ENCODE measurements at regions of chr5 and their contacts with region 1.

Region 1: DNA sequence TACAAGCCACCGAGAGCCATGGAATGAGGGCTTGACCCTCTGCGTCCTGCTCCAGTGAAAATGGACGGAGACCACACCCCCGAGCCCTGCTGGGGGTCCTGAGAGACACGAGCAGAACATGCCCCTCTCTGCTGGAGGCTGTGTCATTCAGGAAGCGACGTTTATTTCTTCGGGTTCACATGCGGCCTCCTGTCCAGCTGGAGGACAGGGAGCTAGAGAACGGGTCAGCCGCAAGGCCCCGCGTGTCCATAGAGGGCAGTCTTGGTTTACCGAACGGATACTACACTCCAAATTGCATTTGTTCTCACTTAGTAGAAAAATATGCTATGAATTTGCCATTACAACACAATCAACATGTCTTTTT is 36.1 kb downstream of the MRPL36 start:
- DNase-seq: peak; percentile 73
- CTCF ChIP-seq: peak; percentile 62

Region 2: GRCh38 chr5:1401536-1402138 is 361.9 kb before region 1 on chr5:
- CTCF ChIA-PET with region 1: no interaction called
- POLR2A ChIA-PET with region 1: no interaction called
- DNase-seq: no peak
- CTCF ChIP-seq: no peak

Region 3: DNA sequence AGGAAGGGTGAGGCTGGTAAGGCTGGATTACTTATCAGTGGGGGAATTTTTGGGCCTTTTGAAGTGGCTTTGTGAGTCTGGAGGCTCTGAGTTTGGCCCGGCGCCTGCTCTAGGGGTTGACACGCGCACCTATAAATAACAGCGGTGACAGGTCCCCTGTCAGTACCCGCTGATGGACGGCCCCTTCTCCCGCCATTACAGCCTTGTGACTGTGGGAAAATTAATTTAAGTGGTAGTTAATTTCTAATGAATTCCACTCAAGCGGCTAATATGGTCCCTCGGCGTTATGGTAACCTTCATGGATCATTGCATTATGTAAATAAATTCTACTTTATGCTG is 19.7 kb after region 1 on chr5:
- CTCF ChIA-PET with region 1: no interaction called
- POLR2A ChIA-PET with region 1: no interaction called
- DNase-seq: peak; percentile 69
- CTCF ChIP-seq: no peak

Region 4: DNA sequence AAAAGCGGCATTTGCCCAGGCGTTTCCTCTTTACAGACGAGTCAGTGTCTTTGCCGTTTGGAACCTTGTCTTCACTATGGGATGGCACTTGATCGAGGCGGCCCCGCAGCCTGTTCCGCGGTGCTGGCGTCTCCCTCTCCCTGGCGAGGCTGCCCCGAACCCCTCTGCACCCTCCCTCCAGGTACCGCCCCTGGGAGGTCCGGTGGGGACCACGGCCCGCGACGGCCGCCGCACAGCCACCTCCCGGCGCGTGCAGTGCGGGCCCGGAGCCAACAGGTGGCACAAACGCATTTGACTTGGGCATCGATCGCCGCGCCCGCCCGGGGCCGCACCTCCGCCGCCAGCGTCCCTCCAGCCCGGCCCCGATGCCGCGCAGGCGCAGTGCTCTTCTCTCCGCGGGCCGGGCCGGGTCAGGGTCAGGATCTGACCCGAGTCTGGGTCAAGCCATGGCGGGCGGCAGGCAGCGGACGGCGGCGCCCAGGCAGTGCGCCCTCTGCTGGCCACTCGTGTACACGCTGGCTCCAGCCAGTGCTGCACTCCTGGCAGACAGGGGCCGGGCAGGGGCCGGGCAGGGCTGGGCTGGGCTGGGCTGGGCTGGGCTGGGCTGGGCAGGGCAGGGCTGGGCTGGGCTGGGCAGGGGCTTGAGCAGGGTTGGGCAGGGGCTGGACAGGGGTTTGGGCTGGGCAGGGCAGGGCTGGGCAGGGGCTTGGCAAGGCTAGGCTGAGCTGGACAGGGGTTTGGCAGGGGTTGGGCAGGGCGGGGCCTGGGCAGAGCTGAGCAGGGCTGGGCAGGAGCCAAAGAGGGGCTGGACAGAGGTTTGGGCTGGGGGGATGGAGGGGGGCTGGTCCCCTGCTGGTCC is 275.0 kb after region 1 on chr5:
- CTCF ChIA-PET with region 1: interaction called, 31 read pairs
- POLR2A ChIA-PET with region 1: no interaction called
- DNase-seq: peak; percentile 89
- CTCF ChIP-seq: peak; percentile 96

Region 5: DNA sequence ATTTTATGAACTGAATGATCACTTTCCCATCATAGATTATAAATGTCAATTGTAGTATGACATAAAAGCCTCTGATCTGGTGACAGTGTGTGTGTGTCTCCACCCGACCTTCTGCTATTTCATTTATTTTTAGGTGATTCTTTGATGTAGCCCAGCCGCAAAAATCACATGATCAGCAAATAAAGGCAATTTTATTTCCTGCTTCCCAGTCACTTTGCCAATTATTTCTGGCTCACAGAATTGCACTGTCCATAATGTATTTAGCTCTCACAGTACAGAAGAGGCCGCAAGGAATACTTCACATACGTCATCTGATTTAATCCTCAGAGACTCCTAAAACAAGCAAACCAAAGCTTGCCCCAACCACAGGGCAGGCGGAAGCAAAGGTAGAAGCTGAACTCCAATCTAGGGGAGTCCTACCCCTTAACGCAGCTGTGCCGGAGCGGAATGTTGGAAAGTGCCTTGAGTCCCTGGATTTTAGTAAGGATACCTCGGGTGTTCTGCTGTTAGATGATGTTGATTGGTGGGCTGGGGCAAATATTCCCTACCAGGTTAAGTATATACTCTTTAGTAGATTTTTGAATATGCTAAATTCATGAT is 503.2 kb after region 1 on chr5:
- CTCF ChIA-PET with region 1: no interaction called
- POLR2A ChIA-PET with region 1: no interaction called
- DNase-seq: no peak
- CTCF ChIP-seq: no peak